ENCODE measurements at regions of chr19 and their contacts with region 1.

Region 1: GRCh38 chr19:17305517-17306284 is at the start of gene MRPL34:
- DNase-seq: peak; percentile 100
- ATAC-seq: peak; percentile 69
- H3K4me3 ChIP-seq: peak within 1 kb of the TSS; percentile 49 to 74 (median 73)
- H3K4me3 Mint-ChIP-seq: peak within 1 kb of the TSS; percentile 91
- H3K27ac ChIP-seq: peak within 1 kb of the TSS; percentile 70 to 71
- H3K27ac Mint-ChIP-seq: peak within 1 kb of the TSS; percentile 90
- H3K4me1 ChIP-seq: peaks cover 38 to 56% of the 10 kb centered on the region in 2 donors
- H3K4me1 Mint-ChIP-seq: peaks cover 56% of the 10 kb centered on the region
- H3K27me3 ChIP-seq: no peaks in the 10 kb centered on the region
- H3K27me3 Mint-ChIP-seq: no peaks in the 10 kb centered on the region
- CTCF ChIP-seq: peak; percentile 76
- total RNA-seq, gene MRPL34: 40.7 and 45.7 TPM in 2 replicates

Region 2: DNA sequence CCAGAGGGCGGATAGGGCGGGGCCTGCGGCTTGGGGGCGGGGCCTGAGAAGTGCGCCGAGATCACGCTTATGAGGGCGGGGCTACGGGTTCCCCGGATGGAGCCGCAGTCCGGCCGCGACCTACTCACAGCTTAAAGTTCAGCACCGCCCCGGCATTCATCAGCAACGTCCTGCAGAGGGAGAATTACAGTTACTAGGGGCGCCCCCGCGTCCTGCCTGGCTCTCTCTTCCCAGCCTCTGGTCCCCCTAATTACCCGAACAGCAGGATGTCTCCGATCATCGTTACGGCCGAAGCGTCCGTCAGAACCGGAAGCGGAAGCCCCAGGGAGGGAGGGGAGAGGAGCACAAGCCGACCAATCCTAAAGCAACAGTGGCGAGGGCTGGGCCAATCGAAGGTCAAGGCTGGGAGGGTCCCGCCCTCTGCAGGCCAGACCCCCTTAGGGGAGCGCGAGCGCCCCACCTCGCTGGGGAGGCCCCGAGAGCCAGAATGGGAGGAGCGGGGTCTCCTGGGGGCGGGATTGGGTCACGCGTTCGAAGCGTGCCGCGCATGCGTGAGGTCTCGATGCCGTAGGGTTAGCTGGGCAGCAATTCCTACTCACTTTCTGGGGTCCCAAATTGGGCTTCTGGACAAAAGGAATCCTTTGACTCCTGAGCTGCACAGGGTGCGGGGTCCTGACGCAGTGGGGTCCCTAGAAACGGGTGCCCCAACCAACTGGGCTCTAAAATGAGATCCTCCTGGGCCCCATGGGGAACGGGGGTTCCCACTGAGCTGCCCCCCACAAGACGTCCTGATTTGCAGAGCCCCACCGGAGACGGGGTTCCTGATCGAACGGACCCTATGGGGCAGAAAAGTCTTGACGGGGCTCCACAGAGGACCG is 645.6 kb before region 1 on chr19 and contains the start of gene SMIM7:
- CTCF ChIA-PET with region 1: no interaction called
- POLR2A ChIA-PET with region 1: interaction called, 4 read pairs
- intact Hi-C with region 1: loop called (anchors 5 kb)
- DNase-seq: peak; percentile 100
- ATAC-seq: peak; percentile 93
- H3K4me3 ChIP-seq: peak within 1 kb of the TSS; percentile 62 to 89 (median 83)
- H3K4me3 Mint-ChIP-seq: peak within 1 kb of the TSS; percentile 99
- H3K27ac ChIP-seq: peak within 1 kb of the TSS; percentile 70 to 79
- H3K27ac Mint-ChIP-seq: peak within 1 kb of the TSS; percentile 97
- H3K4me1 ChIP-seq: peaks cover 26 to 42% of the 10 kb centered on the region in 2 donors
- H3K4me1 Mint-ChIP-seq: peaks cover 46% of the 10 kb centered on the region
- H3K27me3 ChIP-seq: no peaks in the 10 kb centered on the region
- H3K27me3 Mint-ChIP-seq: no peaks in the 10 kb centered on the region
- CTCF ChIP-seq: no peak
- total RNA-seq, gene SMIM7: 132 and 133 TPM in 2 replicates

Region 3: GRCh38 chr19:17075035-17075863 is 230.5 kb before region 1 on chr19 and contains the starts of genes HAUS8 and MYO9B:
- CTCF ChIA-PET with region 1: interaction called, 3 read pairs
- POLR2A ChIA-PET with region 1: no interaction called
- intact Hi-C with region 1: loop called (anchors 1 kb)
- DNase-seq: peak; percentile 100
- ATAC-seq: peak; percentile 87
- H3K4me3 ChIP-seq: peak within 1 kb of the TSS; percentile 77 to 93 (median 86)
- H3K4me3 Mint-ChIP-seq: peak within 1 kb of the TSS; percentile 98
- H3K27ac ChIP-seq: peak within 1 kb of the TSS; percentile 79 to 89
- H3K27ac Mint-ChIP-seq: peak within 1 kb of the TSS; percentile 99
- H3K4me1 ChIP-seq: peaks cover 44 to 65% of the 10 kb centered on the region in 2 donors
- H3K4me1 Mint-ChIP-seq: peaks cover 66% of the 10 kb centered on the region
- H3K27me3 ChIP-seq: no peaks in the 10 kb centered on the region
- H3K27me3 Mint-ChIP-seq: no peaks in the 10 kb centered on the region
- CTCF ChIP-seq: no peak
- total RNA-seq, gene HAUS8: 22.4 and 24.9 TPM in 2 replicates
- total RNA-seq, gene MYO9B: 273 and 288 TPM in 2 replicates

Region 4: GRCh38 chr19:17266975-17267788 is 38.5 kb before region 1 on chr19 and contains the start of gene BABAM1:
- CTCF ChIA-PET with region 1: interaction called, 13 read pairs
- POLR2A ChIA-PET with region 1: interaction called, 12 read pairs
- intact Hi-C with region 1: loop called (anchors 1 kb)
- DNase-seq: peak; percentile 98
- ATAC-seq: peak; percentile 89
- H3K4me3 ChIP-seq: peak within 1 kb of the TSS; percentile 76 to 95 (median 87)
- H3K4me3 Mint-ChIP-seq: peak within 1 kb of the TSS; percentile 84
- H3K27ac ChIP-seq: peak within 1 kb of the TSS; percentile 56 to 67
- H3K27ac Mint-ChIP-seq: peak within 1 kb of the TSS; percentile 86
- H3K4me1 ChIP-seq: peaks cover 6 to 24% of the 10 kb centered on the region in 2 donors
- H3K4me1 Mint-ChIP-seq: peaks cover 18% of the 10 kb centered on the region
- H3K27me3 ChIP-seq: no peaks in the 10 kb centered on the region
- H3K27me3 Mint-ChIP-seq: no peaks in the 10 kb centered on the region
- CTCF ChIP-seq: no peak
- total RNA-seq, gene BABAM1: 126 and 129 TPM in 2 replicates

Region 5: DNA sequence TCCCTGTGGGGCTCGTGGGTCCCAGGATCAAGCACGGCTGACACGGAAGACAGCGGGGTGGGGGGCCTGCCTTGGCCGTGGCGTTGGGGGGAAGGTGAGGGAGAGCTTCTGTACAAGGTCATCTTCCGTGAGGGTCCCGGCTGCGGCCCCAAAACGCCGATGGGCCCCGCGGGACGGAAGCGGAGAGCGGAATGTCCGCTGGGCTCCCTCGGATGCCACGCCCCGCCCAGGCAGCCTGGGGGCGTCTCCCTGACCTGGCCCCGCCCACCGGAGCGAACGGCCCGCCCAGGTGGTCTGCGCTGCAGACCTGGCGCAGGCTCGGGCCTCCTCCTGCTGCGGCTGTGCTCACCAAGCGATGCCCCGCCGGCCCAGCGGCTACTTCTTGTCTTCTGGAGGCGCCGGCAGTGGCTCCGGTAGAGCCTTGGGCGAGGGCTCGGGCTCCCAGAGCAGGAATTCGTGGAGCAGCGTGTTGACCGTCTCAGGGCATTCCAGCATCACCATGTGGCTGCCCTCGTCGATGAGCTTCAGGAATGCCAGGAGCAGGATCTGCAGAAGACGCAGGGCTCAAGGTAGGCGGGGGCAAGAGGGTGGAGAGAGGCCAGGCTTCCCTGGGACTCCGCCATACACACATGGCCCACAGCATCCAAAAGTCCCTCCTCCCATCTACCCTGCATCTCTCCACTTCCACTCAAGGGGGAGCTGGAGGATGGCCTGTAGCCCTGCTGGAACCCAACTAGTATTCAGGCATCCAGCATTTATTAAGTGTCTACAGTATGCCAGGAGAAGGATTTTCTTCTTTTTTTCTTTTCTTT is 13.2 kb before region 1 on chr19:
- CTCF ChIA-PET with region 1: interaction called, 18 read pairs
- POLR2A ChIA-PET with region 1: interaction called, 10 read pairs
- intact Hi-C with region 1: loop called (anchors 1 kb)
- DNase-seq: peak; percentile 85
- ATAC-seq: peak; percentile 93
- H3K4me3 ChIP-seq: peak overlapping the region; percentile 30 to 75 (median 60)
- H3K4me3 Mint-ChIP-seq: peak overlapping the region; percentile 93
- H3K27ac ChIP-seq: no peak overlapping the region
- H3K27ac Mint-ChIP-seq: peak overlapping the region; percentile 81
- H3K4me1 ChIP-seq: peaks cover 0 to 10% of the 10 kb centered on the region in 2 donors
- H3K4me1 Mint-ChIP-seq: peaks cover 12% of the 10 kb centered on the region
- H3K27me3 ChIP-seq: no peaks in the 10 kb centered on the region
- H3K27me3 Mint-ChIP-seq: no peaks in the 10 kb centered on the region
- CTCF ChIP-seq: peak; percentile 79

Region 6: GRCh38 chr19:17353386-17353785 is 47.7 kb after region 1 on chr19:
- CTCF ChIA-PET with region 1: no interaction called
- POLR2A ChIA-PET with region 1: no interaction called
- intact Hi-C with region 1: no loop called
- DNase-seq: no peak
- ATAC-seq: no peak
- H3K4me3 ChIP-seq: no peak overlapping the region
- H3K4me3 Mint-ChIP-seq: no peak overlapping the region
- H3K27ac ChIP-seq: no peak overlapping the region
- H3K27ac Mint-ChIP-seq: peak overlapping the region; percentile 15
- H3K4me1 ChIP-seq: no peaks in the 10 kb centered on the region
- H3K4me1 Mint-ChIP-seq: no peaks in the 10 kb centered on the region
- H3K27me3 ChIP-seq: peaks cover 0 to 32% (median 12%) of the 10 kb centered on the region in 4 experiments
- H3K27me3 Mint-ChIP-seq: peaks cover 36% of the 10 kb centered on the region
- CTCF ChIP-seq: no peak

Region 7: GRCh38 chr19:17390665-17391370 is 85.1 kb after region 1 on chr19:
- CTCF ChIA-PET with region 1: interaction called, 13 read pairs
- POLR2A ChIA-PET with region 1: interaction called, 5 read pairs
- intact Hi-C with region 1: no loop called
- DNase-seq: peak; percentile 91
- ATAC-seq: peak; percentile 100
- H3K4me3 ChIP-seq: peak overlapping the region in 4 of 5 experiments; percentile 41 to 69 (median 58)
- H3K4me3 Mint-ChIP-seq: peak overlapping the region; percentile 91
- H3K27ac ChIP-seq: no peak overlapping the region
- H3K27ac Mint-ChIP-seq: peak overlapping the region; percentile 41
- H3K4me1 ChIP-seq: peaks cover 23 to 29% of the 10 kb centered on the region in 2 donors
- H3K4me1 Mint-ChIP-seq: peaks cover 21% of the 10 kb centered on the region
- H3K27me3 ChIP-seq: peaks cover 0 to 22% (median 9%) of the 10 kb centered on the region in 4 experiments
- H3K27me3 Mint-ChIP-seq: no peaks in the 10 kb centered on the region
- CTCF ChIP-seq: peak; percentile 68

Region 8: GRCh38 chr19:17441241-17442021 is 135.7 kb after region 1 on chr19:
- CTCF ChIA-PET with region 1: no interaction called
- POLR2A ChIA-PET with region 1: no interaction called
- intact Hi-C with region 1: no loop called
- DNase-seq: peak; percentile 48
- ATAC-seq: peak; percentile 31
- H3K4me3 ChIP-seq: no peak overlapping the region
- H3K4me3 Mint-ChIP-seq: no peak overlapping the region
- H3K27ac ChIP-seq: no peak overlapping the region
- H3K27ac Mint-ChIP-seq: no peak overlapping the region
- H3K4me1 ChIP-seq: no peaks in the 10 kb centered on the region
- H3K4me1 Mint-ChIP-seq: no peaks in the 10 kb centered on the region
- H3K27me3 ChIP-seq: no peaks in the 10 kb centered on the region
- H3K27me3 Mint-ChIP-seq: no peaks in the 10 kb centered on the region
- CTCF ChIP-seq: peak; percentile 18

Region 9: GRCh38 chr19:17511724-17512573 is 206.2 kb after region 1 on chr19:
- CTCF ChIA-PET with region 1: no interaction called
- POLR2A ChIA-PET with region 1: interaction called, 12 read pairs
- intact Hi-C with region 1: no loop called
- DNase-seq: peak; percentile 96
- ATAC-seq: peak; percentile 84
- H3K4me3 ChIP-seq: peak overlapping the region; percentile 68 to 98 (median 85)
- H3K4me3 Mint-ChIP-seq: peak overlapping the region; percentile 96
- H3K27ac ChIP-seq: peak overlapping the region; percentile 82 to 94
- H3K27ac Mint-ChIP-seq: peak overlapping the region; percentile 95
- H3K4me1 ChIP-seq: peaks cover 18 to 24% of the 10 kb centered on the region in 2 donors
- H3K4me1 Mint-ChIP-seq: peaks cover 40% of the 10 kb centered on the region
- H3K27me3 ChIP-seq: no peaks in the 10 kb centered on the region
- H3K27me3 Mint-ChIP-seq: no peaks in the 10 kb centered on the region
- CTCF ChIP-seq: peak; percentile 38